Astrocyte of the cerebellum (primary cell): ENCODE measurements at regions of chr5 and their contacts with region 1.

Region 1: GRCh38 chr5:147971472-147971871 is 65.1 kb upstream of the C5orf46 start:
- DNase-seq: no peak
- H3K4me3 ChIP-seq: no peak overlapping the region
- CTCF ChIP-seq: no peak

Region 2: GRCh38 chr5:147874910-147875367 is 96.5 kb before region 1 on chr5:
- in situ Hi-C with region 1: no loop called
- DNase-seq: no peak
- H3K4me3 ChIP-seq: no peak overlapping the region
- CTCF ChIP-seq: no peak

Region 3: GRCh38 chr5:147906332-147907095 is 65.0 kb before region 1 on chr5 and contains the start of gene C5orf46:
- in situ Hi-C with region 1: no loop called
- DNase-seq: peak; percentile 42
- H3K4me3 ChIP-seq: no peak within 1 kb of the TSS
- CTCF ChIP-seq: no peak

Region 4: GRCh38 chr5:148005788-148006520 is 34.5 kb after region 1 on chr5:
- in situ Hi-C with region 1: loop called (anchors 5 kb)
- DNase-seq: no peak
- H3K4me3 ChIP-seq: no peak overlapping the region
- CTCF ChIP-seq: no peak

Region 5: DNA sequence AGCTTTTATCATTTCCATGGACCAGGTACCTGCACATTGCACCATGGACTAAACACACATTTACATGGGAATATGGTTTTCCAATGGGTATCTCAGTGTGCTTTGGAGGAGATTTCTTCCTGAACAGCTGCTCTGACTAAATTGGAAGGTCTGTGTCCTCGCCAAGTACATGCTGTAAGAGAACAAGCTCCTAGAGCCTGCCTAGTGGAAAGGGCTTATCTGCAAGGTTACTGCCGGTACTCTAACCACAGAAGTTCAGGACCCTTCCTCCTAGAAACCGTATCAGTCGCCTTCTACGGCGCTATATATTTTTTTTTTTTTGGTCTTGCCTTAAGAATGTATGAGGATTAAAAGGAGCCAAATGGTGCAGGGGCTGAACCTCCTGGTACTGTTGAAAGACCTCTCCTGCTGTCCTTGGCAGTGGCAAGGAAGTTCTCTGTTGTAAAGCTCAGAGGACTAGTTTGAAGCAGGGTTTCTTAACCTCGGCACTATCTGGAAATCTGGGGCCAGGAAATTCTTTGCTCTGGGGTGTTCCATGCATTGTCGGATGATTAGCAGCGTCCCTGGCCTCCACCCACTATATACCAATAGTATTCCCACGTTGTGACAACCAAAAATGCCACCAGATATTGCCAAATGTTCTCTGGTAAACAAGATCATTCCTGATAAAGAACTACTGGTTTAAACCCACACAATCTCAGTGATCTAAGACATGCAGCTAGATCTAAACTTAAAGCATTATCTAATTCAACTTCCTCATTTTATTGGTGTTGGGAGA is 519.7 kb after region 1 on chr5:
- in situ Hi-C with region 1: loop called (anchors 5 kb)
- DNase-seq: no peak
- H3K4me3 ChIP-seq: no peak overlapping the region
- CTCF ChIP-seq: no peak